Activated CD4-positive, alpha-beta T cell treated with anti-CD3 and anti-CD28 coated beads for 36 hours (primary cell): ENCODE measurements at regions of chr4 and their contacts with region 1.

Region 1: GRCh38 chr4:121307445-121308327 is 73.1 kb downstream of the QRFPR start:
- DNase-seq: peak; percentile 63
- ATAC-seq: peak; percentile 69
- H3K4me3 Mint-ChIP-seq: no peak overlapping the region
- H3K27ac Mint-ChIP-seq: peak overlapping the region; percentile 48
- H3K4me1 Mint-ChIP-seq: peaks cover 16% of the 10 kb centered on the region
- H3K27me3 Mint-ChIP-seq: peaks cover 2% of the 10 kb centered on the region

Region 2: GRCh38 chr4:120156120-120156718 is 1151.5 kb before region 1 on chr4:
- CTCF ChIA-PET with region 1: interaction called, 5 read pairs
- POLR2A ChIA-PET with region 1: no interaction called
- intact Hi-C with region 1: loop called (anchors 1 to 2 kb)
- DNase-seq: peak; percentile 29
- ATAC-seq: no peak
- H3K4me3 Mint-ChIP-seq: no peak overlapping the region
- H3K27ac Mint-ChIP-seq: no peak overlapping the region
- H3K4me1 Mint-ChIP-seq: no peaks in the 10 kb centered on the region
- H3K27me3 Mint-ChIP-seq: no peaks in the 10 kb centered on the region

Region 3: GRCh38 chr4:121041307-121042090 is 266.2 kb before region 1 on chr4:
- CTCF ChIA-PET with region 1: no interaction called
- POLR2A ChIA-PET with region 1: no interaction called
- intact Hi-C with region 1: loop called in 1 of 2 experiments (anchors 5 kb)
- DNase-seq: peak; percentile 55
- ATAC-seq: peak; percentile 100
- H3K4me3 Mint-ChIP-seq: no peak overlapping the region
- H3K27ac Mint-ChIP-seq: no peak overlapping the region
- H3K4me1 Mint-ChIP-seq: peaks cover 13% of the 10 kb centered on the region
- H3K27me3 Mint-ChIP-seq: peaks cover 26% of the 10 kb centered on the region

Region 4: GRCh38 chr4:121192480-121192879 is 115.2 kb before region 1 on chr4:
- CTCF ChIA-PET with region 1: interaction called, 60 read pairs
- POLR2A ChIA-PET with region 1: no interaction called
- intact Hi-C with region 1: loop called (anchors 1 kb)
- DNase-seq: peak; percentile 27
- ATAC-seq: peak; percentile 50
- H3K4me3 Mint-ChIP-seq: peak overlapping the region; percentile 42
- H3K27ac Mint-ChIP-seq: no peak overlapping the region
- H3K4me1 Mint-ChIP-seq: peaks cover 59% of the 10 kb centered on the region
- H3K27me3 Mint-ChIP-seq: no peaks in the 10 kb centered on the region

Region 5: DNA sequence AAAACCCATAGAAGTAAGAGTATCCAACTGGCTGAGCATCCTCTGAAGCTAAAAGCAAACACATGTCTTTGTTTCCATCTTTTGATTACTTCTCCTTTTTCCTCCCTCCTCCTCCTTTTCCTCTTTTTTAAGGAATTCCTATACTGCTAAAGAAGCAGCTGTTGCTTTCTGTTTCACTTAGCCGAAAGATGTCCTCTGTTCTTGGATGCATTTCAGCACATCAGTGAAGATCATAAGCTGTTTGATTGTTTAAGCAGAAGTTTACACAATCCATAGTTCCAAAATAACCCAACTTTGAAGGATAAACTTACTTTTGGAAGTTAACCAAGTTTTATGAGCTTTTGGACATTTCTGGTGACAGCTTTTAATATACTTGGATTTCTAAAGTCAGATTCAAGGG is 88.5 kb before region 1 on chr4:
- CTCF ChIA-PET with region 1: interaction called, 11 read pairs
- POLR2A ChIA-PET with region 1: no interaction called
- intact Hi-C with region 1: no loop called
- DNase-seq: no peak
- ATAC-seq: no peak
- H3K4me3 Mint-ChIP-seq: no peak overlapping the region
- H3K27ac Mint-ChIP-seq: no peak overlapping the region
- H3K4me1 Mint-ChIP-seq: peaks cover 22% of the 10 kb centered on the region
- H3K27me3 Mint-ChIP-seq: no peaks in the 10 kb centered on the region

Region 6: GRCh38 chr4:121272526-121272925 is 35.2 kb before region 1 on chr4:
- CTCF ChIA-PET with region 1: interaction called, 20 read pairs
- POLR2A ChIA-PET with region 1: no interaction called
- intact Hi-C with region 1: no loop called
- DNase-seq: no peak
- ATAC-seq: peak; percentile 68
- H3K4me3 Mint-ChIP-seq: no peak overlapping the region
- H3K27ac Mint-ChIP-seq: no peak overlapping the region
- H3K4me1 Mint-ChIP-seq: peaks cover 10% of the 10 kb centered on the region
- H3K27me3 Mint-ChIP-seq: peaks cover 17% of the 10 kb centered on the region

Region 7: GRCh38 chr4:121448231-121448630 is 140.5 kb after region 1 on chr4:
- CTCF ChIA-PET with region 1: no interaction called
- POLR2A ChIA-PET with region 1: no interaction called
- intact Hi-C with region 1: no loop called
- DNase-seq: no peak
- ATAC-seq: no peak
- H3K4me3 Mint-ChIP-seq: no peak overlapping the region
- H3K27ac Mint-ChIP-seq: no peak overlapping the region
- H3K4me1 Mint-ChIP-seq: no peaks in the 10 kb centered on the region
- H3K27me3 Mint-ChIP-seq: peaks cover 2% of the 10 kb centered on the region

Region 8: GRCh38 chr4:121462660-121463261 is 155.1 kb after region 1 on chr4:
- CTCF ChIA-PET with region 1: no interaction called
- POLR2A ChIA-PET with region 1: no interaction called
- intact Hi-C with region 1: no loop called
- DNase-seq: peak; percentile 38
- ATAC-seq: peak; percentile 47
- H3K4me3 Mint-ChIP-seq: no peak overlapping the region
- H3K27ac Mint-ChIP-seq: no peak overlapping the region
- H3K4me1 Mint-ChIP-seq: no peaks in the 10 kb centered on the region
- H3K27me3 Mint-ChIP-seq: peaks cover 3% of the 10 kb centered on the region

Region 9: DNA sequence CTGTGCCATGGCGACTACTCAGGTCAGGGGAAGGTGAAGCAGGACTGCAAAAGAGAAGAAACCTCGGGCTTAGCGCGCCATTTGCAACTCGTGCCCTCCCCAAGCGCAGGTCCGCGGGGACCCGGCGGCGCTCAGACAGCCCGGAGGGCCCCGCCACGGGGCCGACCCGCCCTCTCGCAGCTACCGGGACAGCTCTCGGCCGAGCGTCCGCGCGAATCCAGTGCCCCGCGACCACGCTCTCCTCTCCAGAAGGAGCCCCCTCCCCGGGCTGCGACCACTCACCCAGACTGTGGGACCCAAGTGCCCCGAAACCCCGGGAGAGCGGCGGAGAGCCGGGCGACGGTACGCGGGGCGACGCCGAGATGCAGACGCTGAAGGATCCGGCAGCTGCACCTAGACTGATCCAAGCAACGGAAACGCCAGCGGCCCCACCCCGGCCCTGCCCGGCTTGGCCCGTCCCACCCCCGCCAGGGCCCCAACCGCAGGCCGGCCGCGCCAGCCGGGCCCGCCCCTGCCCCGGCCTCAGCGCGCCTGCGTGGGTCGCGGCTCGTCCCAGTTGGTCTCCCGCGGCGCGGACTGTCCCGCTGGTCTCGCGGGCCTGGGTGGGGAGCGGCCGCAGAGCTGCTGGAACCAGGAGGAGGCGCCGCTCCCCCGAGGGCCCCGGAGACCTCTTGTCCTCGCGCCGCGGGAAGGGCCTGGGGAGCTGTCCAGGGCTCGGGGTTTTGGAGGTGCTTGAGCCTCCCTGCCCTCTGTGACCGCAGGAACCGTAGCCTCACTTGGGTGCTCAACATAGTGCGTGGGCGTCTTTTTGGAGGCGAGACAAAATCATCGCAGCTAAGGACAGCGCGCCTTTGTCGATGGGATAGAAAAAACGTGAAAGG is 389.1 kb after region 1 on chr4 and contains the start of gene ANXA5:
- CTCF ChIA-PET with region 1: no interaction called
- POLR2A ChIA-PET with region 1: no interaction called
- intact Hi-C with region 1: no loop called
- DNase-seq: peak; percentile 86
- ATAC-seq: peak; percentile 87
- H3K4me3 Mint-ChIP-seq: peak within 1 kb of the TSS; percentile 95
- H3K27ac Mint-ChIP-seq: peak within 1 kb of the TSS; percentile 99
- H3K4me1 Mint-ChIP-seq: peaks cover 41% of the 10 kb centered on the region
- H3K27me3 Mint-ChIP-seq: peaks cover 26% of the 10 kb centered on the region
- total RNA-seq, gene ANXA5: 105 to 117 TPM

Region 10: GRCh38 chr4:122151982-122152710 is 844.5 kb after region 1 on chr4 and contains the start of gene BLTP1:
- CTCF ChIA-PET with region 1: no interaction called
- POLR2A ChIA-PET with region 1: no interaction called
- intact Hi-C with region 1: no loop called
- DNase-seq: peak; percentile 93
- ATAC-seq: peak; percentile 91
- H3K4me3 Mint-ChIP-seq: peak within 1 kb of the TSS; percentile 85
- H3K27ac Mint-ChIP-seq: peak within 1 kb of the TSS; percentile 98
- H3K4me1 Mint-ChIP-seq: peaks cover 50% of the 10 kb centered on the region
- H3K27me3 Mint-ChIP-seq: no peaks in the 10 kb centered on the region
- total RNA-seq, gene BLTP1: 16.5 to 20.1 TPM